ENCODE measurements at regions of chr3 and their contacts with region 1.

Region 1: DNA sequence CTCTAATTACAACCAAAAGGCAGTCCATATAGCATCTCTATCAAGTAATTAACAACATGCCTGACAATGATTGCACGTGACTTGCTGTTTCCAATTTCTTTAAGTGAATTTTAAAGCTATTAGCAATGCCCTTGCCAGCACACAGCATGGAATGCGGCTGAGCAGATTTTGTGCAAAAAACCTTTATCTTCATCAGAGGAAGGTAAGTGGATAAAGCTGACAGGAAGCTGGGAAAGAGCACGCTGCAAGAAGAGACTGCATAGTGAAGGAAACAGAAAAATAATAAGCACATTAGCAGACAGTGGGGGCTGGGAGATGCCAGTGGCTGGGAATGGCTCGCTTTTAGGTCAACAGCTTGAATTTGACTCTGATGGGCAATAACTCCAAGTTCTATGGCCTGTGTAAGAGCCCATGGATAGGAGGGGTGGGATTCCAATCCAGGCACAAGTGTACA is 138.8 kb downstream of the PDZRN3 start:
- DNase-seq: no peak
- H3K4me3 ChIP-seq: no peak overlapping the region
- H3K27ac ChIP-seq: no peak overlapping the region
- H3K4me1 ChIP-seq: no peaks in the 10 kb centered on the region
- H3K27me3 ChIP-seq: peaks cover 0 to 66% (median 27%) of the 10 kb centered on the region in 5 experiments

Region 2: DNA sequence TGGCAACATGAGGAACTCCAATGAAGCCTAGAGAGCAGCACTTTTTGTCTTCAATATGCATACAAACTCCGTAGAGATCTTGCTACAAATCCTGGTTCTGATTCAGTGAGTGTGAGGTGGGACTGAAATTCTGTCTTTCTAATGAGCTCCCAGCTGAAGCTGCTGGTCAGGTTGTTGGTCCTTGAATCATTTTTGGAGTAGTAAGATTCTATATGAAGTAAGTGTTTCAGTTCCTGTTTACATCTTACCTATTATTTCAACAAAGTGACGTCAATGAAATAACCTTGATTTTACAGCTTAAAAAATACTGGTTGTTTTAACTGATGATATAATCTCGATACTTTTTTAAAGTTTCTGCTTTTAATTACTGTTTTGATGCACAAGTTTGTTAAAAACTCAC is 671.6 kb before region 1 on chr3:
- CTCF ChIA-PET with region 1: no interaction called
- POLR2A ChIA-PET with region 1: no interaction called
- DNase-seq: no peak
- H3K4me3 ChIP-seq: no peak overlapping the region
- H3K27ac ChIP-seq: no peak overlapping the region
- H3K4me1 ChIP-seq: peaks cover 2 to 27% (median 17%) of the 10 kb centered on the region in 4 experiments
- H3K27me3 ChIP-seq: no peaks in the 10 kb centered on the region

Region 3: DNA sequence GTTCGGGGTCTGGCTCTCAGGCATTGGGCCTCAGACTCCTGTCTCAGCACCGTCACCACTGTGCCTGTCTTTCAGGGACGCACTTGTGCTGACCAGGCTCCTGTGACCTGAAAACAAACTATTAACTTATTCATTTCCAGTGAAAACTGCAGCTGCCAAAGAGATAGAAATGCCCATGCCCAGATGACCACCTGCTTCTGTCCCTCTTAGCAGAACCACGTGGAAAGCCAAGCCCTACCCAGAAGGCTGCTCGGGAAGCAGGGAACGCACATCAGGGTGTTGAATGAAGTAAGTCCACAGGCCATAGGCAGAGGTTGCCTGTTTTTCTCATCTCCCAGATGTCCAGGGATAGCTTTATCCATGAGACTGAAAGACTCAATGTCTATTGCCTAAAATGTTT is 205.2 kb before region 1 on chr3:
- CTCF ChIA-PET with region 1: no interaction called
- POLR2A ChIA-PET with region 1: interaction called, 10 read pairs
- DNase-seq: no peak
- H3K4me3 ChIP-seq: no peak overlapping the region
- H3K27ac ChIP-seq: no peak overlapping the region
- H3K4me1 ChIP-seq: no peaks in the 10 kb centered on the region
- H3K27me3 ChIP-seq: peaks cover 0 to 5% (median 2%) of the 10 kb centered on the region in 5 experiments

Region 4: GRCh38 chr3:73813310-73814292 is 327.7 kb after region 1 on chr3:
- CTCF ChIA-PET with region 1: no interaction called
- POLR2A ChIA-PET with region 1: no interaction called
- DNase-seq: peak in 2 of 3 donors; percentile 1 to 6
- H3K4me3 ChIP-seq: peak overlapping the region in 1 of 7 experiments; percentile 8
- H3K27ac ChIP-seq: no peak overlapping the region
- H3K4me1 ChIP-seq: peaks cover 0 to 11% (median 0%) of the 10 kb centered on the region in 4 experiments
- H3K27me3 ChIP-seq: no peaks in the 10 kb centered on the region

Region 5: GRCh38 chr3:73832426-73832825 is 346.5 kb after region 1 on chr3:
- CTCF ChIA-PET with region 1: no interaction called
- POLR2A ChIA-PET with region 1: no interaction called
- DNase-seq: no peak
- H3K4me3 ChIP-seq: no peak overlapping the region
- H3K27ac ChIP-seq: no peak overlapping the region
- H3K4me1 ChIP-seq: no peaks in the 10 kb centered on the region
- H3K27me3 ChIP-seq: no peaks in the 10 kb centered on the region

Measured in common myeloid progenitor, CD34-positive (primary cell).